ENCODE measurements at regions of chr22 and their contacts with region 1.

Region 1: GRCh38 chr22:24758164-24758799 is 16.2 kb downstream of the PIWIL3 start:
- DNase-seq: peak; percentile 25 to 76 (median 33)
- ATAC-seq: peak; percentile 55; the same call in 2 of the 3 replicates
- H3K4me3 ChIP-seq: no peak overlapping the region
- H3K27ac ChIP-seq: no peak overlapping the region
- H3K4me1 ChIP-seq: peaks cover 0 to 19% of the 10 kb centered on the region in 2 experiments; a peak in 3 of 5 replicates
- H3K27me3 ChIP-seq: no peaks in the 10 kb centered on the region
- CTCF ChIP-seq: peak; percentile 61 to 83 (median 72); a peak in 5 of 6 replicates
- EP300 ChIP-seq: no peak
- POLR2A ChIP-seq: no peak
- RAD21 ChIP-seq: peak; percentile 89 to 97

Region 2: DNA sequence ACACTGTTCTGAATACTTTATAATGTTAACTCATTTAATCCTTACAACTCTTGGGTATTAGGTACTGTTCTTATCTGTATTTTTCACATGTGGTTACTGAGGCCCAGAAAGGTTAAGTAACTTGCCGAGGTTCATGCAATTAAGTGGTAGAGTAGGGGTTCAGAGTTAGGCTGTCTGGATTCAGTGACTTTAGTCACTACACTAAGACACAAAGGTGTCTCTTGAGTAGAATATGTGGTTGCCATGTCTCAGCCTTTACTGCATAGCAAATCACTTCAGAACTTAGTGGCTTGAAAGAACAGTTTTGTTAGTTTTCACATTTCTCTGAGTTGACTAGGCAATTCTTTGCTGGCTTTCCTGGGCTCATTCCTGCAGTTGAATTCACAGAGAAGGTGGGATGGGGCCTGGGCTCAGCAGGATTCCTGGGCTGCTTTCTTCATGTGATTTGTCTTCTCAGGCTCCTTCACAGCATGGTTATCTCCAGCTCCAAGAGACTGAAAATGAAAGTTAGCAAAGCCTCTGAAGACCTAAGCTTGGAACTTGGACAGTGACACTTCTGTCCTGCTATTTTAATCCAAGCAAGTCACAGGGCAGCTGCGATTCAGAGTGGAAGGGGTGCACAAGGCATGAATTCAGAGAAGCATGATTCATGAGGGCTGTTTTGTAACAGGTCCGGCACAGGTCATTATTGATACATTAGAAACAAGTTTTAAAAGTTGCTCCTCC is 419.4 kb before region 1 on chr22:
- CTCF ChIA-PET with region 1: no interaction called
- POLR2A ChIA-PET with region 1: no interaction called
- in situ Hi-C with region 1: no loop called
- intact Hi-C with region 1: no loop called
- DNase-seq: no peak
- ATAC-seq: no peak
- H3K4me3 ChIP-seq: no peak overlapping the region
- H3K27ac ChIP-seq: no peak overlapping the region
- H3K4me1 ChIP-seq: no peaks in the 10 kb centered on the region
- H3K27me3 ChIP-seq: no peaks in the 10 kb centered on the region
- CTCF ChIP-seq: no peak
- EP300 ChIP-seq: no peak
- POLR2A ChIP-seq: no peak
- RAD21 ChIP-seq: no peak

Region 3: GRCh38 chr22:24706054-24706453 is 52.2 kb before region 1 on chr22:
- CTCF ChIA-PET with region 1: no interaction called
- POLR2A ChIA-PET with region 1: no interaction called
- in situ Hi-C with region 1: no loop called
- intact Hi-C with region 1: loop called (anchors 1 kb)
- DNase-seq: peak; percentile 26 to 63 (median 43)
- ATAC-seq: peak; percentile 93
- H3K4me3 ChIP-seq: no peak overlapping the region
- H3K27ac ChIP-seq: no peak overlapping the region
- H3K4me1 ChIP-seq: peaks cover 10 to 18% of the 10 kb centered on the region in 2 experiments
- H3K27me3 ChIP-seq: no peaks in the 10 kb centered on the region
- CTCF ChIP-seq: peak; percentile 53 to 58 (median 56)
- EP300 ChIP-seq: no peak
- POLR2A ChIP-seq: no peak
- RAD21 ChIP-seq: peak; percentile 31 to 69; a peak in 3 of 4 replicates

Region 4: GRCh38 chr22:24728790-24729637 is 29.3 kb before region 1 on chr22:
- CTCF ChIA-PET with region 1: no interaction called
- POLR2A ChIA-PET with region 1: no interaction called
- in situ Hi-C with region 1: no loop called
- intact Hi-C with region 1: loop called (anchors 2 kb)
- DNase-seq: peak; percentile 82 to 95 (median 86)
- ATAC-seq: peak; percentile 95
- H3K4me3 ChIP-seq: peak overlapping the region; percentile 28
- H3K27ac ChIP-seq: peak overlapping the region; percentile 95
- H3K4me1 ChIP-seq: peaks cover 4 to 37% of the 10 kb centered on the region in 2 experiments
- H3K27me3 ChIP-seq: no peaks in the 10 kb centered on the region
- CTCF ChIP-seq: no peak
- EP300 ChIP-seq: peak; percentile 100
- POLR2A ChIP-seq: 0 out of 2 replicates have a peak, but pooled peaks have one; percentile 59
- RAD21 ChIP-seq: peak; percentile 24 to 27; a peak in 3 of 4 replicates

Region 5: GRCh38 chr22:24834845-24835570 is 76.7 kb after region 1 on chr22:
- CTCF ChIA-PET with region 1: no interaction called
- POLR2A ChIA-PET with region 1: no interaction called
- in situ Hi-C with region 1: no loop called
- intact Hi-C with region 1: no loop called
- DNase-seq: peak in 1 of 4 experiments; percentile 9
- ATAC-seq: peak; percentile 65; the same call in 2 of the 3 replicates
- H3K4me3 ChIP-seq: no peak overlapping the region
- H3K27ac ChIP-seq: no peak overlapping the region
- H3K4me1 ChIP-seq: no peaks in the 10 kb centered on the region; a peak in 1 of 5 replicates
- H3K27me3 ChIP-seq: peaks cover 0 to 15% of the 10 kb centered on the region in 2 experiments; a peak in 2 of 5 replicates
- CTCF ChIP-seq: peak in 2 of 3 experiments; percentile 28 to 43; a peak in 3 of 6 replicates
- EP300 ChIP-seq: no peak
- POLR2A ChIP-seq: no peak
- RAD21 ChIP-seq: no peak

Region 6: GRCh38 chr22:25219948-25220442 is 461.7 kb after region 1 on chr22:
- CTCF ChIA-PET with region 1: no interaction called
- POLR2A ChIA-PET with region 1: no interaction called
- in situ Hi-C with region 1: no loop called
- intact Hi-C with region 1: no loop called
- DNase-seq: no peak
- ATAC-seq: no peak
- H3K4me3 ChIP-seq: no peak overlapping the region
- H3K27ac ChIP-seq: no peak overlapping the region
- H3K4me1 ChIP-seq: no peaks in the 10 kb centered on the region
- H3K27me3 ChIP-seq: peaks cover 0 to 4% of the 10 kb centered on the region in 2 experiments; a peak in 2 of 5 replicates
- CTCF ChIP-seq: no peak
- EP300 ChIP-seq: no peak
- POLR2A ChIP-seq: no peak
- RAD21 ChIP-seq: no peak

Measured in K562 (cell line).